Naive thymus-derived CD8-positive, alpha-beta T cell (primary cell): ENCODE measurements at regions of chr15 and their contacts with region 1.

Region 1: GRCh38 chr15:99565299-99566156 is at the start of gene MEF2A:
- DNase-seq: peak; percentile 80 to 96 (median 90)
- ATAC-seq: peak; percentile 70 to 76
- H3K4me3 Mint-ChIP-seq: peak within 1 kb of the TSS; percentile 91 to 99 (median 97)
- H3K27ac Mint-ChIP-seq: peak within 1 kb of the TSS; percentile 93 to 98 (median 96)
- H3K4me1 Mint-ChIP-seq: peaks cover 22 to 62% (median 56%) of the 10 kb centered on the region in 4 donors
- H3K27me3 Mint-ChIP-seq: no peaks in the 10 kb centered on the region
- polyA plus RNA-seq, gene MEF2A: 14.6 to 22.4 (median 14.7) TPM

Region 2: GRCh38 chr15:99409097-99409473 is 156.4 kb before region 1 on chr15:
- POLR2A ChIA-PET with region 1: interaction called, 16 read pairs
- DNase-seq: peak in 4 of 10 donors; percentile 16 to 75 (median 38)
- ATAC-seq: peak; percentile 81 to 93
- H3K4me3 Mint-ChIP-seq: peak overlapping the region in 1 of 10 donors; percentile 4
- H3K27ac Mint-ChIP-seq: peak overlapping the region in 6 of 10 donors; percentile 25 to 71 (median 62)
- H3K4me1 Mint-ChIP-seq: peaks cover 13 to 34% (median 25%) of the 10 kb centered on the region in 4 donors
- H3K27me3 Mint-ChIP-seq: no peaks in the 10 kb centered on the region

Region 3: DNA sequence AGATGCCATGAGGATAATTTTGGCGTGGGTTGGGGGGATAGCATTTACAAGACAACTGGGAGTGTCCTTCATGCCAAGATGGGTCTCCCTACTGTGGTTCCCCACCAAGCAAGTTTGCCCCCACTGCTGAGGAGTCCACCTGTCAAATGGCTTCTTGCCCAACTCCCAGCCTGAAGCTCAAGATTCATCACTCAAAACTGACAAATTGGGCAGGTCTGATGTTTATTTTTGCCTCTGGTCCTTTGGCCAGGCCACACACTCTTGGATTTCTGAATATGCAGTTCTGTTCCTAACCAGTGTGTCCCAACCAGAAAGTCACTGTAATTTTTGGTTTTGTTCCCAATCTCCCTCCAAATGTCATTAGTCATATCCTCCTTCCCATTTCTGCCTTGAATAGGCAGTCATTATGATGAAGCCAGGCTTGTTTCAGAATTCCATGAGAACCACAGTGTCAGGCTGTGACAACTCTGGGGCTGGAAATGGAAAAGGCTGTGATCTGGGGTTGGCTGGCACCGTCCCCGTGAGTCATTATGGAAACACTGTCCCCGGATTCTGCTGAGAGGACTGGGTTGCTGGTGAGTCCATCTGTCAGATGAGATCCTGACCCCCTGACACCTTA is 29.0 kb before region 1 on chr15:
- POLR2A ChIA-PET with region 1: no interaction called
- DNase-seq: no peak
- ATAC-seq: no peak
- H3K4me3 Mint-ChIP-seq: no peak overlapping the region
- H3K27ac Mint-ChIP-seq: no peak overlapping the region
- H3K4me1 Mint-ChIP-seq: peaks cover 0 to 2% (median 0%) of the 10 kb centered on the region in 4 donors
- H3K27me3 Mint-ChIP-seq: peaks cover 0 to 3% (median 0%) of the 10 kb centered on the region in 5 donors

Region 4: GRCh38 chr15:99683000-99683670 is 117.6 kb after region 1 on chr15:
- POLR2A ChIA-PET with region 1: no interaction called
- DNase-seq: peak in 1 of 10 donors; percentile 36
- ATAC-seq: peak; percentile 76 to 89
- H3K4me3 Mint-ChIP-seq: peak overlapping the region in 9 of 10 donors; percentile 26 to 80 (median 66)
- H3K27ac Mint-ChIP-seq: peak overlapping the region; percentile 37 to 95 (median 90)
- H3K4me1 Mint-ChIP-seq: peaks cover 20 to 45% (median 41%) of the 10 kb centered on the region in 4 donors
- H3K27me3 Mint-ChIP-seq: no peaks in the 10 kb centered on the region

Region 5: DNA sequence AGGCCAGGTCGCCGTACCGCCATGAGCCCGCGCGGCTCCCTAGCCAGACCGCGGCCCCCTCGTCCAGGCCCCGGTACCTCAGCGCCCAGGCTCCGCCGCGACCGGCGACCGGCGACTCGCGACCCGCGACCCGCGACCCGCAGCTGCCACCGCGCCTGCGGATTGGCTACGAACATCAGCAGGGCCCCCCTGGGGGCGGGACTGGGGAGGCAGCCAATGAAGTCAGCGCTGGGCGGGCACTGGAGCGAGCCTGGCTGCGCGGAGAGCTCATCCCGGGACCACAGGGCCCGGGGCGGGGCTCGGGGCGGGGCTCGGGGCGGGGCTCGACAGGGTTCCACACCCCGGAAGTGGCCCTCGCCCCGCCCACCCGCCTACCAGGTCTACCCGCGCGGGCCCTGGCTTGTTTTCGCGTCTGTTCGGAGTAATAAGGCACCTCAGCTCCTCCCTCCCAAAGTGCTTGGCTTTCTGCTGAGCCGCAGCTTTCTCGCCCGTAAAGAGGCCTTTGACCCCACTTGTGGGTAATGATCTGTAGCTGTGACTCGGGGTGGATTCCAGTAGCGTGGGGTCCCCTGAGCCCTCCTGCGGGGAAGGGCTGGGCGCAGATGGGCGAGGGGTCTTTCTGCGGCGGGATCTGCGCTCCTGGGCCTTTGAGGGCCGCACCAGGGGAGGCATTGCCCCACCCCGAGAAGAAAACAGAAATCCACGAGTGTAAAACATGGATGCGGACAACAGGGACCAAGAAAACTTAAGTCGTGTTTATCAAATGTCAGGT is 167.9 kb after region 1 on chr15 and contains the start of gene LYSMD4:
- POLR2A ChIA-PET with region 1: interaction called, 12 read pairs
- DNase-seq: peak; percentile 92 to 100 (median 97)
- ATAC-seq: peak; percentile 97 to 98
- H3K4me3 Mint-ChIP-seq: peak within 1 kb of the TSS; percentile 80 to 93 (median 88)
- H3K27ac Mint-ChIP-seq: peak within 1 kb of the TSS; percentile 89 to 97 (median 94)
- H3K4me1 Mint-ChIP-seq: peaks cover 7 to 23% (median 21%) of the 10 kb centered on the region in 4 donors
- H3K27me3 Mint-ChIP-seq: no peaks in the 10 kb centered on the region
- polyA plus RNA-seq, gene LYSMD4: 2.4 to 5.2 (median 3.8) TPM